Right cardiac atrium (tissue), 5 donors: ENCODE measurements at regions of chr22 and their contacts with region 1.

Region 1: GRCh38 chr22:23539135-23539838 is 40.8 kb downstream of the IGLL1 start:
- DNase-seq: peak; percentile 84 to 94 (median 87)
- ATAC-seq: peak; percentile 96 to 97
- H3K4me3 ChIP-seq: peak overlapping the region; percentile 16
- H3K27ac ChIP-seq: peak overlapping the region; percentile 12
- H3K4me1 ChIP-seq: peaks cover 1% of the 10 kb centered on the region
- H3K27me3 ChIP-seq: no peaks in the 10 kb centered on the region

Region 2: DNA sequence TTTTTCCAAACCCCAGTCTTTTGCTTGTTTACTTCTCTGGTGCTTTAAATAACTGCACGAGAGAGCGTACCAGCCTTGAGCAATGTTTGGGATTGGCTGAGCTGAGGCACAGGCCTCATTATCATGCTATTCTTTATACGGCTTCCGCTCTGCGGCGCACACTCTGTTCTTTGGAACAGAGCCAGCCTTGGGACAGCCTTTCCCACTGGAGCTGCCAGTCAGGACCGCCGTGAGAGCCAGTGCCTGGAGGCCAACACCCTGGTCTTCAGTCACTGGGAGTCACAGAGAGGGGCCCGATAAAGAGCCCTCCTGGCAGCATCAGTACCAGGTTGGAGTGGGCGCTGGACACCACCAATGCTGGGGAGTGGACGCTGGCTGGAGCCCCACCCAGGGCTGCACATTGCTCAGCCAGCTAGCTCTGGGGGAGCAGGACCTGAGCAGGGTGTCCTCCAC is 233.3 kb before region 1 on chr22:
- intact Hi-C with region 1: loop called in 3 of 4 experiments (anchors 5 to 10 kb)
- DNase-seq: peak; percentile 90 to 94 (median 91)
- ATAC-seq: peak; percentile 89 to 91
- H3K4me3 ChIP-seq: peak overlapping the region; percentile 19
- H3K27ac ChIP-seq: peak overlapping the region; percentile 99
- H3K4me1 ChIP-seq: peaks cover 14% of the 10 kb centered on the region
- H3K27me3 ChIP-seq: no peaks in the 10 kb centered on the region

Region 3: DNA sequence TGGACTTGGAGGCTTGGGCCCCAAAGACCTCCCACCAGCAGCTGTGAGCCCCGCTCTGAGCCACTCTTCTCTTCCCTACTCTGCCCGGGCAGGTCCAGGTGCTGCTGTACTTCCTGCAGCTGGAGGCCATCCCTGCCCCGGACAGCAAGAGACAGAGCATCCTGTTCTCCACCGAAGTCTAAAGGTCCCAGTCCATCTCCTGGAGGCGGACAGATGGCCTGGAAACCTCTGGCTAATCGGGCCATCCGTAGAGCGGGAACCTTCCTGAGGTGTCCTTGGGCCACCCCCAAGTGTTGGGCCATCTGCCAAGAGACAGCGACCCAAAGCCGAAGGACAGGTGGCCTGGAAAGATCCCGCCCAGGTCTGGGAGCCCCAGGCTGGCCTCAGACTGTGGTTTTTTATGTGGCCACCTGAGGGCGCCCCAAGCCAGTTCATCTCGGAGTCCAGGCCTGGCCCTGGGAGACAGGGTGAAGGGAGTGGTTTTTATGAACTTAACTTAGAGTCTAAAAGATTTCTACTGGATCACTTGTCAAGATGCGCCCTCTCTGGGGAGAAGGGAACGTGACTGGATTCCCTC is 223.9 kb before region 1 on chr22:
- intact Hi-C with region 1: loop called in 2 of 4 experiments (anchors 5 to 10 kb)
- DNase-seq: peak in 2 of 3 donors; percentile 82 to 88
- ATAC-seq: peak in 1 of 2 donors; percentile 51
- H3K4me3 ChIP-seq: no peak overlapping the region
- H3K27ac ChIP-seq: no peak overlapping the region
- H3K4me1 ChIP-seq: no peaks in the 10 kb centered on the region
- H3K27me3 ChIP-seq: no peaks in the 10 kb centered on the region

Region 4: GRCh38 chr22:23395530-23396361 is 143.5 kb before region 1 on chr22:
- intact Hi-C with region 1: loop called in 1 of 4 experiments (anchors 10 kb)
- DNase-seq: no peak
- ATAC-seq: no peak
- H3K4me3 ChIP-seq: no peak overlapping the region
- H3K27ac ChIP-seq: no peak overlapping the region
- H3K4me1 ChIP-seq: no peaks in the 10 kb centered on the region
- H3K27me3 ChIP-seq: no peaks in the 10 kb centered on the region

Region 5: GRCh38 chr22:23591201-23591791 is 52.0 kb after region 1 on chr22:
- intact Hi-C with region 1: loop called in 1 of 4 experiments (anchors 5 kb)
- DNase-seq: peak; percentile 64 to 85 (median 76)
- ATAC-seq: peak; percentile 69 to 77
- H3K4me3 ChIP-seq: no peak overlapping the region
- H3K27ac ChIP-seq: no peak overlapping the region
- H3K4me1 ChIP-seq: no peaks in the 10 kb centered on the region
- H3K27me3 ChIP-seq: no peaks in the 10 kb centered on the region

Region 6: DNA sequence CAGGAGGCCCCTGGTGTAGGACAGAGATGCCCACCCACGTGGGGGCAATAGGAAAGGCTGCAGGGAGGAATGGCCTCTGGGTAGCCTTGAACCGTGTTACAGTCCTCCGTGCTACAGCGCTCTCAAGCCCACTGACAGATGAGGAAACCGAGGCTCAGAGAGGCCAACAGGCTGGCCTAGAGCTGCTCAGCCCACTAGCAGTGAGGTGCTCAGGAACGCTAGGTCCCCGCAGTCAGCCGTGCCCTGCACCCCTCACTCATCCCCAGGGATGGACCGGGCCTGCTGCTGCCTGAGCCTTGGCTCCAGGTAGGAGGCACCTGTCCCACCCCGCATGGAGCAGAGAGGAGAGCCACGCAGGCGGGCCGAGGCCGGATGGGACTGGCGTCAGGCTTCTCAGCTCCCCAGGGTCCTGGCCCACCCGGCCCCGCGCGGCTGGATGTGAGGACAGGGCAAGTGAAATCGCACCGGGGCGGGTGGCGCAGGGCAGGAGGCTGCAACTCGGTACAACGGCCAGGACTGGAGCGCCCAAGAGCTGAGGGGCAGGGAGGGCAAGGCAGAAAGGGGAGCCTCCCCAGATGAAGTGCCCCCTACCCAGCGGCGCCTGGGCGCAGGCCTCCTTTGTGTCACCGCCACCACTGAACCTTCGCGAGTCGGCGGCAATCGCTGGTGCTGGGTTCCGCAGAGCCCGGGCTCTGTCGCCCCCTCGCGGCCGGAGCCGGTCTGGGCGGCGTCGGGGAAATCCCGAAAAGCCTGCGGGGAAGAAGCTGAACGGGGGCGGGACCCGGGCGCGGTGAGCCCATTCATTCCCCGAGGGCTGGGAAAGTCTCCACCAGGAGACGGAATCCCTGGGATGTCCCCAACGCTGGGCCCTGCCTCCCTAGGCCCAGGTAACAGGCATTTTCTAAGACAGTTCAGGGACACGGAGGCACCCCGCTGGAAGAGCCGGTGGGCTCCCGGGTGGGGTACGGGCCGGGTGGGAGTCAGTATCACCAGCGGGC is 310.0 kb after region 1 on chr22:
- intact Hi-C with region 1: loop called in 2 of 4 experiments (anchors 5 kb)
- DNase-seq: peak; percentile 79 to 94 (median 94)
- ATAC-seq: peak; percentile 67 to 78
- H3K4me3 ChIP-seq: no peak overlapping the region
- H3K27ac ChIP-seq: no peak overlapping the region
- H3K4me1 ChIP-seq: no peaks in the 10 kb centered on the region
- H3K27me3 ChIP-seq: no peaks in the 10 kb centered on the region